ENCODE measurements at regions of chr5 and their contacts with region 1.

Region 1: DNA sequence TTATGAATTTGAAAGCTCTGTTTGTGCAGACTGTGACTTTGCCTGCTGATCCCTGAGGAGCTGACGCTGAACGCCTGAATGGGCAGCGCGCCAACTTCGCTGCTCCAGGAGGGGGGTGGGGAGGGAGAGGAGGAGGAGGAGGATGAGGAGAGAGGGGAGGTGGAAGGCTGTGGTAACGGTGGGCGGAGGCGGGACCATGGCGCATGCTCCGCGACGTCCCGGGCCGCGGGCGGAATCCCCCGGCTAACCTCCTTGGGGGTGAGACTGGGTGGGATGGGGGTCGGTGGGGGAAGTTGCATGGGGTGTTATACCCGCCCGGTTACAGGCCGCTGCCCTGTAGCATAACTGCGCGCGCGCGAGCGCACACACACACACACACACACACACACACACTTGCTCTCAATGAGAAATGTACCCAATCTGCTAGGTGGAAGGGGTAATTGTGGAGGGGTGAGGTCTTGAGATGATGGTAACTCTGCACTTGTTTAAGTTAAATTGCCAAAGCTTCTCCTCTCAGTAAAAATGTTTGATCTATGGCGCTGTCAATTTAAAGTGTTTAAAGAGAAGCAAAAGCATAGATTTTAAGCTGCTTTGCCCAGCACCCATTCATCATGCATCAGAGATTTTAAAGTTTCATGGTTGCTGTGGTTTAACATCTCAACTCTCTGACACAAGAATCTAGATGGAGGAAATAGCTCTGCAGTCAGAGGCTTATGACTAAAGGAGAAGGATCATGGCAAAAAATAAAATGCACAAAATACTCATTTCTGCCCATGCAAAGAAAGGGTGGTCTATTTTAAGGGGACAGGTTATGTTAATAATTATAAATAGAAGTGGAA is 76.6 kb upstream of the TBCA start:
- DNase-seq: peak; percentile 35
- H3K4me3 Mint-ChIP-seq: peak overlapping the region; percentile 72
- H3K27ac Mint-ChIP-seq: peak overlapping the region; percentile 77
- H3K4me1 Mint-ChIP-seq: peaks cover 14% of the 10 kb centered on the region
- H3K27me3 Mint-ChIP-seq: peaks cover 23% of the 10 kb centered on the region

Region 2: DNA sequence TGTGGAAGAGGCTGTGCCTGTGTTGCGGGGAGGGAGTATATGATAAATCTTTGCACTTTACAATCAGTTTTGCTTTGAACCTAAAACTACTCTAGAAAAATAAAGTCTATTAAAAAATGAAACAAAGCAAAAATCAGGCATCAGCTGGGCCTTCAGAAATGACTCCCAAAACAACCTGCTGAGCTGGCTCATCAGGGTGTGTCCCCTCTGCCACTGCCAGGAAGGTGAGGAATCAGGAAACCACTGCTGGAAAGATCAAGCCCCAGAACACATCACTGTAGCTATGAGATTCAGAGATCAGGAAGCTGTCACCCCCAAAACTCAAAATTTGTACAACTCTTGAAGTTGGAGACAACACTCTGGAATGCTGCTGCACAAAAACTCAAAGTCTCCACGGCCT is 36.1 kb before region 1 on chr5:
- intact Hi-C with region 1: no loop called
- DNase-seq: no peak
- H3K4me3 Mint-ChIP-seq: no peak overlapping the region
- H3K27ac Mint-ChIP-seq: no peak overlapping the region
- H3K4me1 Mint-ChIP-seq: no peaks in the 10 kb centered on the region
- H3K27me3 Mint-ChIP-seq: peaks cover 9% of the 10 kb centered on the region

Region 3: DNA sequence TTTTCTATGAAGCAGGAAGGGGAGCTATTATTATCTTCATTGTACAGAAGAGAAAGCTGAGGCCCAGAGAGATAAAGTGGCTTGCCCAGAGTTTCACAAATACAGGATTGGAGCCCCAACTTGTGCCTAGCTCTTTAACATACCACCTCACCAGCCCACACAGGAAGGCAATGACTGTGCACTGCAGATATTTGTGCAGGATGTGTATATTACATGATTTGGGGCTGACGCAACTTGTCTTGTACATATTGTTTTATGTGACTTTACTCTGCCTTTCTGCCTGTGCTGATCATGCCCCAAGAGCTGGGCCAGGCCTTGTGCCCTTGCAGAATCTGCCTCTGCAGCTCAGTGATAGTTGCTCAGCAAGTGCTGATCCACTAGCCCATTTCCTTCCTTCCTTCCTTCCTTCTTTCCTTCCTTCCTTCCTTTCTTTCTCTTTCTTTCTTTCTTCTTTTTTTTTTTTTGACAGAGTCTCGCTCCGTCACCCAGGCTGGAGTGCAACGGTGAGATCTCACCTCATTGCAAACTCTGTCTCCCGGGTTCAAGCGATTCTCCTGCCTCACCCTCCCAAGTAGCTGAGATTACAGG is 30.0 kb after region 1 on chr5:
- intact Hi-C with region 1: loop called (anchors 1 kb)
- DNase-seq: no peak
- H3K4me3 Mint-ChIP-seq: no peak overlapping the region
- H3K27ac Mint-ChIP-seq: peak overlapping the region; percentile 50
- H3K4me1 Mint-ChIP-seq: peaks cover 30% of the 10 kb centered on the region
- H3K27me3 Mint-ChIP-seq: peaks cover 16% of the 10 kb centered on the region

Region 4: GRCh38 chr5:77972469-77973252 is 119.9 kb after region 1 on chr5:
- intact Hi-C with region 1: loop called (anchors 5 kb)
- DNase-seq: no peak
- H3K4me3 Mint-ChIP-seq: peak overlapping the region; percentile 56
- H3K27ac Mint-ChIP-seq: no peak overlapping the region
- H3K4me1 Mint-ChIP-seq: peaks cover 10% of the 10 kb centered on the region
- H3K27me3 Mint-ChIP-seq: peaks cover 75% of the 10 kb centered on the region

Region 5: DNA sequence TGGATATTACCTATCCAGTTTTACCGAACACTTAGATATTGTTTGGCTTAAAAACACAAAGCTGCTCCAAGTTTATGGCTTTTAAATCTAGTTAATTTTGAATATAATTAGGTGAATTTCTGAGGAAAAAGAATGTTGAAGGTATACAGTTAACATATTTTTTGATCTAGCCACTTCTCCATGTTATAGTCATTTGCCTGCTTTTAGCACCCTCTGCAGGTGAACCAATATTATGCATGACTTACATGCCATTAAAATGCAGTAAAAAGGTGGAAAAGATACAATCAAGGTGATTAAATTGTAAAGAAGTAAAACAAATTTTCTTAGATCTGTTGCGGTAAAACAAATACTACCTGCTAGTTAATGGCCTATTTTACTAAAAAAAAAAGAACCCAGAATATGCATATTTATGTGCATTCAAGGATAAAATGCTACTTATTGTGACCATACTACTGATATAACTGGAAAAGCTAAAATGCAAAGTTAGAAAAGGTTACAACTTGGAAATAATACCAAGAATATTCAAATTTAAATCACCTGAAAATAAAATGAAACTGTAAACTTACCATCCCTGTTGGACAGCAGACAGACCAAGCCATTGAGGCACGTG is 309.6 kb after region 1 on chr5:
- intact Hi-C with region 1: loop called (anchors 5 kb)
- DNase-seq: no peak
- H3K4me3 Mint-ChIP-seq: no peak overlapping the region
- H3K27ac Mint-ChIP-seq: no peak overlapping the region
- H3K4me1 Mint-ChIP-seq: peaks cover 4% of the 10 kb centered on the region
- H3K27me3 Mint-ChIP-seq: no peaks in the 10 kb centered on the region